Endothelial cell of umbilical vein (primary cell): ENCODE measurements at regions of chr5 and their contacts with region 1.

Region 1: GRCh38 chr5:31427013-31427723 is 104.7 kb downstream of the DROSHA start:
- DNase-seq: peak; percentile 73
- H3K4me3 ChIP-seq: no peak overlapping the region
- H3K27ac ChIP-seq: peak overlapping the region; percentile 16
- H3K4me1 ChIP-seq: peaks cover 22% of the 10 kb centered on the region
- H3K27me3 ChIP-seq: no peaks in the 10 kb centered on the region
- CTCF ChIP-seq: no peak
- POLR2A ChIP-seq: no peak

Region 2: GRCh38 chr5:31531888-31532710 is 104.9 kb after region 1 on chr5 and contains the starts of genes C5orf22 and DROSHA:
- CTCF ChIA-PET with region 1: no interaction called
- POLR2A ChIA-PET with region 1: no interaction called
- dilution Hi-C with region 1: no loop called
- intact Hi-C with region 1: loop called (anchors 5 kb)
- DNase-seq: peak; percentile 96
- H3K4me3 ChIP-seq: peak within 1 kb of the TSS; percentile 86 to 93 (median 88)
- H3K27ac ChIP-seq: peak within 1 kb of the TSS; percentile 64
- H3K4me1 ChIP-seq: peaks cover 14% of the 10 kb centered on the region
- H3K27me3 ChIP-seq: no peaks in the 10 kb centered on the region
- CTCF ChIP-seq: no peak
- POLR2A ChIP-seq: peak; percentile 59
- total RNA-seq, gene C5orf22: 27.5 and 27.6 TPM in 2 replicates
- total RNA-seq, gene DROSHA: 90.0 and 96.4 TPM in 2 replicates